ENCODE measurements at regions of chr17 and their contacts with region 1.

Region 1: DNA sequence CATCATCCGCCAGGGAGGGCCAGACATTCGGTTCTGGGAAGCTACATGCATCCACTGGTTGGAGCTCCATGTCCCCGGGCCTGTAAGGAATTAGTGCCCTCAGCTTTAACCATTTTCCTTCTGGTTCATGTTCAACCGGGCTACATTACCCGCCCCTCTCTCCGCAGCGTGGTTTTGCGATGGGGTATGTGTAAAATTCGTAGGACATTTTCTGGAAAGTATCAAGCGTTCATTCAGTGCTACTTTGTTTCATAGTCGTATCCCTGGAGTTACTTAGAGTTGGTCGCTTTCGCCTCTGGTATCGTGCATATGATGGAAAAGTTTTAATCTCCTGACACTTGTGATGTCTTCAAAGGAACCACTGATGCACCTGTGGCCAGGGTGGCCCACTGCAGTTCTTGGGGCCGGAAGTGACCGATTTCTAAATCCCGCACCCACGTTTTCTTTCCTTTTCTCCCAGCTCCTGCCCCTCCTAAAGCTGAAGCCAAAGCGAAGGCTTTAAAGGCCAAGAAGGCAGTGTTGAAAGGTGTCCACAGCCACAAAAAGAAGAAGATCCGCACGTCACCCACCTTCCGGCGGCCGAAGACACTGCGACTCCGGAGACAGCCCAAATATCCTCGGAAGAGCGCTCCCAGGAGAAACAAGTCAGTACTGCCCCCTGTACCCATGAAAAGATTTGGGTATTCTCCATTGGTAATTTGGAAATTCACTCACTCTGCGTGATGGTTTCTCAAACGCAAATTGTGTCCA is 637 bp downstream of the RPL23A start:
- DNase-seq: no peak

Region 2: GRCh38 chr17:28644985-28645939 is 75.2 kb before region 1 on chr17 and contains the start of gene BLTP2:
- CTCF ChIA-PET with region 1: interaction called, 5 read pairs
- POLR2A ChIA-PET with region 1: interaction called, 19 read pairs
- DNase-seq: peak; percentile 92

Region 3: GRCh38 chr17:28734813-28735722 is 14.6 kb after region 1 on chr17:
- CTCF ChIA-PET with region 1: no interaction called
- POLR2A ChIA-PET with region 1: interaction called, 409 read pairs
- DNase-seq: no peak

Region 4: DNA sequence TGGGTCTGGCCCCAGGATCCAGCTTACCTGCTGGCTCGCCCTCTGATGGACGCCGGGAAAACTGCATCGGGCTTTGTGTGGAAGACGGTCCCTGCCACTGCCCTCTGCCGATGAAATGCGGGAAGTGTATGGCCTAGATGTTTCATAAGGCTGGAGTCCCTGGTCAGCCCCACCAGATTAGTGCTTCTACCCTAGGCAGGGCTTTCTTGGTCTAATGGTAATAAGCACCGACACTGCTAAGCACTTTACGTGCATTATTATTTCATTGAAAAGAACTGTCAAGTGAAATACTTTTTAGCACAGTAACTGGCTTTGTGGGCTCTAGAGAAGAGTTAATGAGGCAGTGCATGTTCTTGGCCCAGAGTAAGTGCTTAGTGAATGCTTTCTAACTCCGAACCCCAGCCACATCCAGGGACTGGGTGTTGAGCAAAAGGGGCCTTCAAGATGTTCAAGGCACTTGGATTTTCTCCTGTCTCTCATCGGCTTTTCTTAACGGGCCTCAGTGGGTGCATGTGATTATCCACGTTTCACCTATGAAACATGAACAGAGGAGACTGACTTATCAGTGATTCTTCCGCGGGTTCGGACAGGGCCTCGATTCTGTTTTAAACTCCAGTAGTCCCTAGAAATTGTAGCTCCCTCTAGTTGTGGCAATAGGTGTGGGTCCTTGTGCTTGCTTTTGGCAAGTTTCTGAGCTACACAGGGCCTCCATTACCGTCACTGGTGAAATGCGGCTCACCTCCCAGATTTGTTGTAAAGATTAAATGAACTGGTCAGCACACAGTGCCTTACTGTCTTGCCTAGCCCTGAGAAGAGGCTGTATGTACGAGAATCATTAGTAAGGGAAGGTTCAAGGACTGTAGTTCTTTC is 30.0 kb after region 1 on chr17:
- CTCF ChIA-PET with region 1: interaction called, 185 read pairs
- POLR2A ChIA-PET with region 1: interaction called, 409 read pairs
- DNase-seq: peak; percentile 70

Region 5: DNA sequence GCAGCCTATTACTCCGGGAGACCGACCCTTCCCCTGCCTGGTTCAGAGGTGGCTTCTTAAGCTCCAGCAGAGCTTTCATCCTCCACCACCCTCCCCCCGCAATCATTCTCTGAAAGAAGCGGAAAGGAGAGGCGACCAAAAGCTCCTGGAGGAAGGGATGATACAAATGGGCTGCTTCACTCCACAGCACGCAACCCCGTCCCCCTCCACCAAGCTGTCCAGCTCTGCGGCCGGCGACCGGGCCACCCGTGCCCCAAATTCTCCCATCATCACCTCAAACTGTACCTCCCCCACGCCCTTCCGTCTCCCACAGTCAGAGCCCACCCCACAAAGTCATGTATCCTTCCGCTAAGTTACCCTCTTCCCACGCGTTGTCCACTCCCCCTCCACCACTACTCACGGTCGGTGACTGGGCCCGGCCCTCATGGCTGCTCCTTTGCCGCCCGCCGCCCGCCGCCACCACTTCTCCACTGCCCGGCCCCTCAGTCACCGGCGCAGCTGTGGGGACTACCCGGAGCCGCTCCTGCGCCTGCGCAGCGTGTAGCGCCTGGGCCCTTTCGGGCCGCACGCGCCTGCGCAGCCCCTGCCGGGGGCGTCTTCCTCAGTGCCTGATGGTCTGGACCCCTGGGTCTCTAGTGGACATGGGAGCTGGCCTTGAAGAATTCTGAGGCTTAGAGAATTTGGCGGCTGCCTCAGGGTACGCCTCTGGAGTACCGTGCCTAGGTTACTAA is 122.0 kb after region 1 on chr17 and contains the start of gene FAM222B:
- CTCF ChIA-PET with region 1: no interaction called
- POLR2A ChIA-PET with region 1: interaction called, 10 read pairs
- DNase-seq: peak; percentile 95